Mammary epithelial cell (primary cell): ENCODE measurements at regions of chr15 and their contacts with region 1.

Region 1: DNA sequence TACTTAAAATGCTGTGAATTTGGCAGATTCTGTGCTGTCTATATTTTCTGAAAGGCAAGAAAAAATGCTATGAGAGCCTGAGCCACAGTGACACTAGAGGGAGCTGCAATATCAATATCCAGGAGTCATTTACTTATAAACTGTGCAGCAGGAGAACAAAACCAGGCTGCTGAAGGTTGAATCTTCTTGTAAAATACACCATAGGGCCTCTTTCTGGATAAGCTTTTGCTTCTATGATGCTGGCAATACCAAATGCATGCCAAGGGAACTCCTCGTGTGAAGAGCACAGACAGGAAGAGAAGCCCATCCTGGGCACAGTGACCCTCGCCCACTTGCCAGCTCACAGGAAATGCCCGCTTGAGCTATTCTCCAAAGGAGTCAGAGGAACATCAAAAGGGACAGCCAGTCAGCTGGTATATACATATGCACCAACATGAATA is 48.0 kb upstream of the TSPAN3 start:
- DNase-seq: peak; percentile 40
- H3K4me3 ChIP-seq: no peak overlapping the region
- H3K27ac ChIP-seq: no peak overlapping the region
- H3K4me1 ChIP-seq: no peaks in the 10 kb centered on the region
- H3K27me3 ChIP-seq: no peaks in the 10 kb centered on the region
- CTCF ChIP-seq: peak; percentile 81 to 83

Region 2: DNA sequence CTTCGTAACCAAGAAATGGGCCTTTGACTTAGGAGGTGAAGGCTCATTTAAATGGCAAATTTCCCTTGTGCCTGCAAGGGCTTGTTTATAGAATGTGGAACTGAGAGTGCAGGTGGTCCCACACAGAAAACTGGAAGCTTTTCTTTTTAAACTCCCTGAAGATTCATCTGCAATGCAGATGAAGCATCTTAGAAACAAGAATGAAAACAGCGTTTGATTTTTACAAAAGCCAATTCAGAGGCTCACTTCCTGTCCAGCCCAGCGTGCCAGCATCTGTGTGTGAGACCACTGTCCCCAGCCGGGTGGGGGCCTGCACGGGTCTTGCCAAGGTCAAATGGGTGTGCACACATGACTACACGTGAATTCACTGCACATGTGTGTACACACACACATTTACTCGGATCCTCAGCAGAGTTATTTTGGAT is 419.1 kb after region 1 on chr15:
- CTCF ChIA-PET with region 1: interaction called, 3 read pairs
- dilution Hi-C with region 1: loop called (anchors 5 kb)
- in situ Hi-C with region 1: loop called (anchors 5 to 10 kb)
- intact Hi-C with region 1: loop called (anchors 1 kb)
- DNase-seq: no peak
- H3K4me3 ChIP-seq: no peak overlapping the region
- H3K27ac ChIP-seq: no peak overlapping the region
- H3K4me1 ChIP-seq: peaks cover 8% of the 10 kb centered on the region
- H3K27me3 ChIP-seq: no peaks in the 10 kb centered on the region
- CTCF ChIP-seq: no peak